ENCODE measurements at regions of chr3 and their contacts with region 1.

Region 1: GRCh38 chr3:132416807-132417694 is at the start of gene DNAJC13:
- DNase-seq: peak; percentile 87

Region 2: GRCh38 chr3:131200636-131201199 is 1216.3 kb before region 1 on chr3:
- CTCF ChIA-PET with region 1: no interaction called
- POLR2A ChIA-PET with region 1: no interaction called
- DNase-seq: no peak

Region 3: GRCh38 chr3:132405188-132405587 is 11.9 kb before region 1 on chr3:
- CTCF ChIA-PET with region 1: no interaction called
- POLR2A ChIA-PET with region 1: interaction called, 13 read pairs
- DNase-seq: no peak